Mucosa of descending colon (tissue), 3 donors: ENCODE measurements at regions of chr7 and their contacts with region 1.

Region 1: GRCh38 chr7:85014936-85015660 is 171.8 kb downstream of the SEMA3D start:
- DNase-seq: no peak
- ATAC-seq: no peak
- H3K4me3 ChIP-seq: no peak overlapping the region
- H3K4me1 ChIP-seq: no peaks in the 10 kb centered on the region
- CTCF ChIP-seq: no peak

Region 2: DNA sequence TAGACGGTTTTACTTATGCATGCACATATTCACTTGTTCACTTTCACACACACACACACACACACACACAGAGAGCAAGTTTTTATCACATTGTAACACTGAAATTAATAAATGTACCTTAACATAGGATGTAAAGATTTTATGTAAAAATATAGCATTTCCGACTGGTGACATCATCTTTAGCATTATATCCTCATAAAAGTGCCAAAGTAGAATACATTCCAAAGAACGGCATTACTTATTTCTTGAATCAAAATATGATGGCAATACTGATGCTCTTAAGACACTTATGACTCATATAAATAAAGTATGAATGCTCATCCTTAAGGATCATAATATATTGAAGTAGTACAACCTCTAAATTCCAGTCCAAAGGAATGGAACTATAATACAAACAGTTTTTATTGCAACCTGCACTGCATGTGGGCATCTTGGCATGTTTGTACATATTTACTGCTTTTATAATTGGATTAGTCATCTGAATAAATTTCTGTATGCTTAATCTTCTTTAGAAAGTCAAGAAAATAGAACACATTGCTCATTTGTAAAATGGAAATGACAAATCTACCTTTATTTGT is 530.5 kb before region 1 on chr7:
- intact Hi-C with region 1: loop called in 1 of 2 experiments (anchors 10 kb)
- DNase-seq: no peak
- ATAC-seq: no peak
- H3K4me3 ChIP-seq: no peak overlapping the region
- H3K4me1 ChIP-seq: no peaks in the 10 kb centered on the region
- CTCF ChIP-seq: no peak

Region 3: DNA sequence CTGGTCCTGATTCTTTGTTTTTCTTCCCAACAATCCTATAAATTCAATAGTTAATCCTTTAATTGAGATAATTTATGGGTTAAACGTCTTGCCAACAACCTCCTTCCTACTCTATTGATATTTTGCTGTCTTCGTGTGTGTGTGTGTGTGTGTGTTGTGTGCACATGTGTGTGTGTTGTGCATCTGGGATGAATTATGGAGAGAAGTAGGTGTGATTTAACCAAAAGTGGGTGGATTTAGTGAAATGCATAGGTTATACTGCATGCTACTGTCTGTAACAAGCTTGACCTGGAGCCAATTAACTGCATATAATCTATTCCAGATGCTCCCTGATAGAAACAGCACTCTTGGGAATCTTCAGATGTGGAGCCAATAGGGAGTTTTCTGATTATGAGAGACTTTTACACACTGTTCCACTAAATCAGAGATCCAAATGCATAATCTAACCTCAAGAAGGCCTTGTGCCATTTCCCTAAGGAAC is 110.6 kb after region 1 on chr7:
- intact Hi-C with region 1: no loop called
- DNase-seq: no peak
- ATAC-seq: no peak
- H3K4me3 ChIP-seq: no peak overlapping the region
- H3K4me1 ChIP-seq: no peaks in the 10 kb centered on the region
- CTCF ChIP-seq: no peak